ENCODE measurements at regions of chrX and their contacts with region 1.

Region 1: GRCh38 chrX:40097497-40098263 is at the start of gene BCOR:
- DNase-seq: no peak
- H3K4me3 ChIP-seq: peak within 1 kb of the TSS; percentile 61 to 65
- H3K27ac ChIP-seq: peak within 1 kb of the TSS; percentile 79
- H3K4me1 ChIP-seq: peaks cover 17% of the 10 kb centered on the region
- H3K27me3 ChIP-seq: peaks cover 10% of the 10 kb centered on the region
- CTCF ChIP-seq: no peak
- POLR2A ChIP-seq: peak in 1 of 2 donors; percentile 56
- total RNA-seq, gene BCOR: 19.9 TPM

Region 2: GRCh38 chrX:39726771-39727170 is 370.9 kb before region 1 on chrX:
- intact Hi-C with region 1: loop called (anchors 5 kb)
- DNase-seq: no peak
- H3K4me3 ChIP-seq: no peak overlapping the region
- H3K27ac ChIP-seq: no peak overlapping the region
- H3K4me1 ChIP-seq: no peaks in the 10 kb centered on the region
- H3K27me3 ChIP-seq: no peaks in the 10 kb centered on the region
- CTCF ChIP-seq: no peak
- POLR2A ChIP-seq: no peak

Region 3: GRCh38 chrX:40013266-40014195 is 84.1 kb before region 1 on chrX:
- intact Hi-C with region 1: loop called (anchors 5 kb)
- DNase-seq: no peak
- H3K4me3 ChIP-seq: peak overlapping the region; percentile 49 to 52
- H3K27ac ChIP-seq: peak overlapping the region; percentile 76
- H3K4me1 ChIP-seq: peaks cover 31% of the 10 kb centered on the region
- H3K27me3 ChIP-seq: no peaks in the 10 kb centered on the region
- CTCF ChIP-seq: no peak
- POLR2A ChIP-seq: no peak